Activated naive CD4-positive, alpha-beta T cell treated with anti-CD3 and anti-CD28 coated beads for 36 hours (primary cell): ENCODE measurements at regions of chr3 and their contacts with region 1.

Region 1: GRCh38 chr3:32934150-32934742 is 17.2 kb upstream of the CCR4 start:
- DNase-seq: peak; percentile 52
- H3K4me3 Mint-ChIP-seq: no peak overlapping the region
- H3K27ac Mint-ChIP-seq: no peak overlapping the region
- H3K4me1 Mint-ChIP-seq: no peaks in the 10 kb centered on the region
- H3K27me3 Mint-ChIP-seq: peaks cover 4% of the 10 kb centered on the region

Region 2: GRCh38 chr3:32325957-32326356 is 608.3 kb before region 1 on chr3:
- CTCF ChIA-PET with region 1: no interaction called
- intact Hi-C with region 1: no loop called
- DNase-seq: no peak
- H3K4me3 Mint-ChIP-seq: no peak overlapping the region
- H3K27ac Mint-ChIP-seq: no peak overlapping the region
- H3K4me1 Mint-ChIP-seq: peaks cover 9% of the 10 kb centered on the region
- H3K27me3 Mint-ChIP-seq: no peaks in the 10 kb centered on the region

Region 3: GRCh38 chr3:32733631-32734229 is 200.5 kb before region 1 on chr3:
- CTCF ChIA-PET with region 1: interaction called, 5 read pairs
- intact Hi-C with region 1: loop called (anchors 1 kb)
- DNase-seq: no peak
- H3K4me3 Mint-ChIP-seq: no peak overlapping the region
- H3K27ac Mint-ChIP-seq: no peak overlapping the region
- H3K4me1 Mint-ChIP-seq: no peaks in the 10 kb centered on the region
- H3K27me3 Mint-ChIP-seq: no peaks in the 10 kb centered on the region

Region 4: DNA sequence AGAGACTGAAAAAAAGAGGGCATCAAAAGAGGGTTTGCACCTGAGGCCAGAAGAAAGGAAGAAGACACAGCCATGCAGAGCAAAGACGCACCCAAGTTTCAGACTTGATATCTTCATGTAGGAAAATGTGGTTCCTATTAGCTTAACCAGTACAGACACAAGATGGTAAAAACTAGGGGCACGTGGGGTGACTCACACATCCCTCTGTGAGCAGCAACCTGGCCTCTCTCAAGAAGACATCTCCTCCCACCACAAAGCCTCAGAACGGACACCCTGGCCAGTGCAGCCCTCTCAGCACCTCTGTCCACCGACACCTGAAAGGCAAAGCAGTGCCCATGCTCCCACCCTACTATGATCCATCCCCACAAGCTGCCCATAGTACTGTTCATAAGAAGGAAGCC is 129.4 kb after region 1 on chr3:
- CTCF ChIA-PET with region 1: no interaction called
- intact Hi-C with region 1: no loop called
- DNase-seq: peak; percentile 86
- H3K4me3 Mint-ChIP-seq: no peak overlapping the region
- H3K27ac Mint-ChIP-seq: peak overlapping the region; percentile 93
- H3K4me1 Mint-ChIP-seq: peaks cover 57% of the 10 kb centered on the region
- H3K27me3 Mint-ChIP-seq: no peaks in the 10 kb centered on the region